Ascending aorta (tissue), 2 donors: ENCODE measurements at regions of chr7 and their contacts with region 1.

Region 1: DNA sequence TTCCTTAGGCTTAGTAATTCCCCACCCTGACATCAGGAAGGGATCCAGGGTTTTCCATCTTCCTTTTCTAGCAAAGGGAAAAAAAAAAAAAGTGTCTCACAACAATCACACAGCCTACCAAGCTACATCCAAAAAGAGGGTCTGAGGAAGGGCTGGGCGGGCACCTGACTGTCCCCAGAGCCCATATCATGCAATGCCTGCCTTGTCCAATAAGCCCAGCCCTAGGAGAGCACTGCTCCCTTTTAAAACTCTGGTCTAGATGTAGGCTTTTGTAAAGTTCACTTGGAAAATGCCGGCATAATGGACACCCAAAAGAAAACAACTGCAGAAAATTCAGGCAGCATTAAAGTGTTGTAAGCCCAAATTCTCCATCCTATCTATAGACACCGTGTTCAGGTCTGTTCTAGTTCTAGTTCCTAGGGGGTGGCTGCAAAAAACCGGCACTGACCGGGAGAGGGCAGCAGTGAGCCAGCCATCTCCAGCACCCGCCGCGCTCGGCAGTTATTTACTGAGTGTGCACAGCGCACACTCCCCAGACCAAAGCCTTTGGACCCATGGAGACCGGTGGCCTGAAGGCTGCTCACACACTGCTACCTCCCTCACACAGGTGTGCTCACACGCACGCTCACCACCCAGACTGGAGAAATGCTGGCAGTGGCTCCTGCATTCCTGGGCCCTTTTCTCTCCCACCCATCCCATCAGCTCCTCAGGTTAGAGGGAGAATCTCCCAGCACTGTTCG is 48.7 kb downstream of the PODXL start:
- DNase-seq: peak; percentile 42 to 89
- H3K4me3 ChIP-seq: no peak overlapping the region
- H3K27ac ChIP-seq: no peak overlapping the region
- H3K4me1 ChIP-seq: peaks cover 0 to 3% of the 10 kb centered on the region in 2 donors
- H3K27me3 ChIP-seq: no peaks in the 10 kb centered on the region
- CTCF ChIP-seq: peak; percentile 76 to 96 (median 89)

Region 2: DNA sequence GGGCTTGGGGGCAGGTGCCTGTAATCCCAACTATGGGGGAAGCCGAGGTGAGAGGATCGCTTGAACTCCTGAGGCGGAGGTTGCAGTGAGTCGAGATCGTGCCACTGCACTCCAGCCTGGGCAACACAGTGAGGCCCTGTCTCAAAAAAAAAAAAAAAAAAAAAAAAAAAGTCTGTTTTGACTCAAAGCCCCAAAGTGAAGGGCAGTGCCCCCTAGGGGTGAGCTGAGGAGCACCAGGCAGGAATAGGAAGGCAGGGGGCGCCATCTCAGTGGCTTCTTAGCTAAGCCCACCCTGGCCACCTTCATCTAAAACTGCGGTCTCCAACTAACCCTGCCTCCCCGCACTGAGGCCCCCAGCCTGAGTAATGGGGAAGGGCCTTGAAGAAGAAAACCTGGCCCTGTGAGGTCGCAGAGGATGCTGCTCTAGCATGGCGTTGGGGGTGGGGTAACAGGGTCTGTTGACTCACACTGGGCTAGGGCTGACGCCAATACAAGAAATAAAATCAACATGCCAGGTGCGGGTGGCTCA is 38.9 kb after region 1 on chr7:
- intact Hi-C with region 1: loop called (anchors 1 kb)
- DNase-seq: no peak
- H3K4me3 ChIP-seq: no peak overlapping the region
- H3K27ac ChIP-seq: no peak overlapping the region
- H3K4me1 ChIP-seq: no peaks in the 10 kb centered on the region
- H3K27me3 ChIP-seq: no peaks in the 10 kb centered on the region
- CTCF ChIP-seq: peak in 2 of 3 experiments; percentile 15 to 33

Region 3: DNA sequence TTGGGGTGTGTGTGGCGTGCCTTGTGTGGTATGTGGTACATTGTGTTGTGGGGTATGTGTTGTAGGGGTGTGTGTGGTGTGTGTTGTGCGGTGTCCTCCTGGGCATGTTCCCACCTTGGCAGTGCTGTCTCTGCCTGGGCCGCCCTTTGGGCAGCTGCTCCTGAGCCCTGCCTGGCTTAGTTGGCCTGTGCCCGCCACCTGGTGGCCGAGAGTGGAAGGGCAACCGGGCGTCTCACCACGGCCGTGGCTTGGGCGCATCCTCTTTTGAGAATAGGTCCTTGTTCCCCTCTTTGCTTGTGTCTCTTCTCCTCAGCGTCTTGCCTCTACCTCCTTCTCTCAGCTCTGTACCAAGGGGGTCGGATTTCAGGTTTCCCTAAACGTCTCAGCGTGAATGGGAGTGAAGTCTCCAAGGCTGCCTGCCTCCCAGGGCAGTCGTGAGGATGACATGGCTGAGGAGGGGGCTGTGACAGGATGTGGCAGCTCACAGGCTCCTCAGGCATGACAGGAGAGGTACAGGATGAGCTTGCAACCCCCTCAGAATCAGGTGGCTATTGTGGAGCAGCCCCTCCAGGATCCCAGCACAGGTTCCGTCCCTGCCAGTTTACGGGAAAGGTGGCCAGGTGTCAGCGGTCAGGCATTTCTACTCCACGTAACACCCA is 147.0 kb after region 1 on chr7:
- intact Hi-C with region 1: loop called (anchors 1 kb)
- DNase-seq: peak; percentile 27 to 88
- H3K4me3 ChIP-seq: no peak overlapping the region
- H3K27ac ChIP-seq: no peak overlapping the region
- H3K4me1 ChIP-seq: no peaks in the 10 kb centered on the region
- H3K27me3 ChIP-seq: no peaks in the 10 kb centered on the region
- CTCF ChIP-seq: peak; percentile 89 to 92 (median 90)

Region 4: GRCh38 chr7:131723926-131724325 is 216.2 kb after region 1 on chr7:
- intact Hi-C with region 1: no loop called
- DNase-seq: no peak
- H3K4me3 ChIP-seq: no peak overlapping the region
- H3K27ac ChIP-seq: no peak overlapping the region
- H3K4me1 ChIP-seq: no peaks in the 10 kb centered on the region
- H3K27me3 ChIP-seq: no peaks in the 10 kb centered on the region
- CTCF ChIP-seq: no peak